Gastrocnemius medialis (tissue), 4 donors: ENCODE measurements at regions of chr6 and their contacts with region 1.

Region 1: DNA sequence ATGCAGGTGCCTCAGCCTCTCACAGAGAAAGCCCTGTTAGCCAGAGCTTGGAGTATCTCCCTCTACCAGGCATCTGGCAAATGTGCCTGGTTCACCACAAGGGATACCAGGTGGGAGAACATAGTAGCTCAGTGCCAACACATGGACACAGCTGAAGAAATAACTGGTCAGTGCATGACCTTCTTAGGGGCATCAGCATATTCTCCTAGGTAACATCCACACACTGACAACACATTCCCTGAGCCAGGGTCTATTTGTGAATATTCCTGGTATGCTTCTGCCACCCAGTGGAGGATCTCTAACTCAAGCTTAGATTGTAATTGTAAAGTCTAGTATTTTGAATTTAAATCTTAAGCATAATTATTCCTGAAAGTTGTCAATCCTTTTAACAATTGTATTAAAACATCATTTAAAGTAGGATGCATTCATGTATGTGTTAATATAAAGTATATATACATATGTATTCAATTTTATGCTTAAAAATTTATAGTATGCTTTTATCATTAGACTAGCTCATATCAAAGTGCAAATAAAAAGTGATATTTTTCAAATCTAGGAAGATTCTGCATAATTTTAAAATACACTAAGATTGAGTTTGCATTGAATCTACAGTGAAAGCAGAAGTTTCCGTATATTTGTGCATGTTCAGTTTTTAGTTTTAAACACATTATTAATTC is 45.3 kb upstream of the COL21A1 start:
- DNase-seq: peak in 1 of 2 donors; percentile 4
- ATAC-seq: peak in 1 of 2 donors; percentile 46
- H3K4me3 ChIP-seq: no peak overlapping the region
- H3K27ac ChIP-seq: no peak overlapping the region
- H3K4me1 ChIP-seq: no peaks in the 10 kb centered on the region
- H3K27me3 ChIP-seq: no peaks in the 10 kb centered on the region
- CTCF ChIP-seq: peak; percentile 25 to 62 (median 52)
- POLR2A ChIP-seq: no peak

Region 2: DNA sequence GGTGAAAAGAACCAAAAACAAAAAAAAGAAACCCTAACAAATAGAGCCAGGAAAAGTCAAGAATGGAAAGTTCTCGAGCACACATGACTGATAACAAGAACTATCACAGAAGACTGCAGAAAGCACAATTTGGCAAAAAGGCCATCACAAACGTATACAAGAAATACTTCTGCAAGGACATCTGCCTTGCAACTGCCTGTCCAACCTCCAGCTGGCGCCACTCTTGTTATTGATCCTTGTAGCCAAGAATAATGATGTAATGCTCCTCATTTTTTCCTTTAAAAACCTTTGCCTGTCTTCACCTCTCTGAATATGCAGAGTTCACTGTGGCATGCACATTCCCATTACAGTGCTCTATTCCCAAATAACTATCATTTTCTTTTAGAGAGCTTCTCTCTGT is 329.3 kb before region 1 on chr6:
- in situ Hi-C with region 1: no loop called
- intact Hi-C with region 1: no loop called
- DNase-seq: no peak
- ATAC-seq: no peak
- H3K4me3 ChIP-seq: no peak overlapping the region
- H3K27ac ChIP-seq: no peak overlapping the region
- H3K4me1 ChIP-seq: no peaks in the 10 kb centered on the region
- H3K27me3 ChIP-seq: no peaks in the 10 kb centered on the region
- CTCF ChIP-seq: no peak
- POLR2A ChIP-seq: no peak

Region 3: DNA sequence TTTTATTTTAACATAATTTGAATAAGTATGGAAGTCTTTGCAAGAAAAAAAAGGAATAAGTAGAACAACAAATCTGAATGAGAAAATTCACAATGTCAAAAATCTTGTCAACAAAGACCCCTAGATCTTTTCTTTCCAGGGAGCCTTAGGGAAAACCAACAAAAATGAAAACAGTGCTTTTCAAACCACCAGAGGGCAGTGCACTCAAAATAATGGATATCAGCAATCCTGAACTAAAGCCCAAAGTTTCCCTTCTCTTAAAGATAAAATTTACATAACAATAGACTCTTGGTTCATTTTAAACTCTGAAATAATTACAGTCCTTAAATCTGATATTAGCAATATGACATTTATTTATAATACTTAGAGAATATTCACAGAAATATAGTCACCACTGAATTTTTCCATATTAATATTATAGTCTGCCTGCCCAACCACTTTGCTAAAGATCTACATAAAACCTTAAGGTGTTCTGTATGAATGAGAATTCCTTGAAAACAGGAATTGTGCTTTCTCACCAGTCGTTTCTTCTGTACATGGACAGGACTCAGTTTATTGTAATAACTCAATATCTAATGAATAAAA is 311.9 kb before region 1 on chr6:
- in situ Hi-C with region 1: loop called (anchors 5 to 25 kb)
- intact Hi-C with region 1: loop called (anchors 1 kb)
- DNase-seq: no peak
- ATAC-seq: no peak
- H3K4me3 ChIP-seq: no peak overlapping the region
- H3K27ac ChIP-seq: no peak overlapping the region
- H3K4me1 ChIP-seq: no peaks in the 10 kb centered on the region
- H3K27me3 ChIP-seq: no peaks in the 10 kb centered on the region
- CTCF ChIP-seq: peak; percentile 43 to 58 (median 55)
- POLR2A ChIP-seq: no peak

Region 4: GRCh38 chr6:56227071-56227879 is 65.4 kb before region 1 on chr6:
- in situ Hi-C with region 1: no loop called
- intact Hi-C with region 1: no loop called
- DNase-seq: no peak
- ATAC-seq: no peak
- H3K4me3 ChIP-seq: no peak overlapping the region
- H3K27ac ChIP-seq: no peak overlapping the region
- H3K4me1 ChIP-seq: no peaks in the 10 kb centered on the region
- H3K27me3 ChIP-seq: no peaks in the 10 kb centered on the region
- CTCF ChIP-seq: no peak
- POLR2A ChIP-seq: no peak

Region 5: DNA sequence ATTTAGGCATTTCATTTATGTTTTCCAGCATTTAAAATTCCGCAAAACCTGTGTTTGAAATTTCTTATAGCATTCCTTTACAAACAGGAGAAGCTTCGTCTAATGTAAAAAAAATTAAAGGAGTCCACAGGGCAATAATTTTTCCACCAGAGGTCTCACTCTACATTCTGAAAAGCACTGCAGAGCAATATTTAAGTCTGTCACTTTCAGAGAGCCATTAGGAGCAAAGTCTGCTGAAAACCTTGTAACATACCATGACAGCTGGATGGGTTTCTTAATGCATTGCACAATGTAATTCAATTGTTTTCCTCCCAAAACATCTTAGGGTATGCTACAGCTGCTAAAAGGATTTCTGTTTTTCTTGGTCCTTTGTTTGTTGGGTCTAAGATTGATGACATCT is 897.5 kb after region 1 on chr6:
- in situ Hi-C with region 1: no loop called
- intact Hi-C with region 1: no loop called
- DNase-seq: no peak
- ATAC-seq: no peak
- H3K4me3 ChIP-seq: no peak overlapping the region
- H3K27ac ChIP-seq: no peak overlapping the region
- H3K4me1 ChIP-seq: no peaks in the 10 kb centered on the region
- H3K27me3 ChIP-seq: no peaks in the 10 kb centered on the region
- CTCF ChIP-seq: peak in 1 of 5 experiments; percentile 32
- POLR2A ChIP-seq: no peak